Prostate gland (tissue), 2 donors: ENCODE measurements at regions of chrX and their contacts with region 1.

Region 1: DNA sequence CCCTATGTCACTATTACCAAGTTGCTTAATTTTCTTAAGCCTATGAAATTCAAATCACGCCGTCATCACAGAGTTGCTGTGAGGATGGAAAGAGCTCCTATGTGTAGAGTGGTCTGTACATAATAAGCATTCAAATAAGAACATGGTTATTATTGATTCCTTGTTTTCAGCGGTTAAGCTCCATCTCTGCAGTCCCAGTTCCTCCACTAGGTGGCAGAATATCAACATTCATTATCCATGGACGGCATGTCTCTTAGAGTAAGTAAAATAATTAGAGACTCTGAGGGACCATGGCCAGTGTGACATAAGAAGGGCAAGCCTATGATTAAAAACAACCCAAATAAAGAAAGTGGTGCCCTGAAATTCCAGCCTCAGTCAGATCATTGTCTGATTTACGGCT is 132.5 kb upstream of the NHS start:
- DNase-seq: peak; percentile 34
- H3K4me3 ChIP-seq: no peak overlapping the region
- H3K27ac ChIP-seq: no peak overlapping the region
- H3K4me1 ChIP-seq: no peaks in the 10 kb centered on the region
- H3K27me3 ChIP-seq: no peaks in the 10 kb centered on the region
- CTCF ChIP-seq: peak; percentile 42 to 69 (median 62)
- POLR2A ChIP-seq: no peak

Region 2: GRCh38 chrX:17397074-17397473 is 154.6 kb after region 1 on chrX:
- intact Hi-C with region 1: no loop called
- DNase-seq: no peak
- H3K4me3 ChIP-seq: no peak overlapping the region
- H3K27ac ChIP-seq: no peak overlapping the region
- H3K4me1 ChIP-seq: no peaks in the 10 kb centered on the region
- H3K27me3 ChIP-seq: no peaks in the 10 kb centered on the region
- CTCF ChIP-seq: no peak
- POLR2A ChIP-seq: no peak

Region 3: DNA sequence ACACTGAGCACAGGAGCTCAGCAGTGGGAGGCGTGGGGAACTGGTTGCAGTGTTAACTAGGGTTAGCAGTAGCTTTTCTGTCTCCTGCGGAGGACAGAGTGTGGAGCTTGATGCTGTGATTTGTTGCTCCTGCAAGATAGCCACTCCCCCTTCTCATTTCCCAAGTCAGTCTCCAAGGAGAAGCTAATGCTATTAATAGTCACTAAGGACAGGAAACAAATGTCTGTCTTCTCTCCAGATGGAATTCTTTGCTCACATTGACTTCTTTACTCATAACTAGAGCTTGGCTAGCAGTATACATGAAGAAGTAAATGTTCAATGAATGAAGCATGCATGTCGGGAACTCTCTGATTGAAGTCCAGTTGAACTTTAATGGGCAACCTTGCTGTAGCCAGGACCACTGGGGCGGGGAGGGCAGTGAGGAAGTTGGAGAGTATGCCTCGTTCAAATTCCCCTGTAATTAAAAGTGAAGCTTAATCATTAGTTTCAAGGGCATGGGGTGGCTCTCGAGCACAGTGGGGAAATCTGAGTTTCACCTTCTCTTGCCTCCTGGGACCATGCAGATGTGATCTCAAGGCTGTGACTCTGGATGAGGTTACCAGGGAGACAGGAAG is 338.2 kb after region 1 on chrX:
- intact Hi-C with region 1: loop called (anchors 10 kb)
- DNase-seq: no peak
- H3K4me3 ChIP-seq: no peak overlapping the region
- H3K27ac ChIP-seq: no peak overlapping the region
- H3K4me1 ChIP-seq: no peaks in the 10 kb centered on the region
- H3K27me3 ChIP-seq: no peaks in the 10 kb centered on the region
- CTCF ChIP-seq: no peak
- POLR2A ChIP-seq: no peak

Region 4: DNA sequence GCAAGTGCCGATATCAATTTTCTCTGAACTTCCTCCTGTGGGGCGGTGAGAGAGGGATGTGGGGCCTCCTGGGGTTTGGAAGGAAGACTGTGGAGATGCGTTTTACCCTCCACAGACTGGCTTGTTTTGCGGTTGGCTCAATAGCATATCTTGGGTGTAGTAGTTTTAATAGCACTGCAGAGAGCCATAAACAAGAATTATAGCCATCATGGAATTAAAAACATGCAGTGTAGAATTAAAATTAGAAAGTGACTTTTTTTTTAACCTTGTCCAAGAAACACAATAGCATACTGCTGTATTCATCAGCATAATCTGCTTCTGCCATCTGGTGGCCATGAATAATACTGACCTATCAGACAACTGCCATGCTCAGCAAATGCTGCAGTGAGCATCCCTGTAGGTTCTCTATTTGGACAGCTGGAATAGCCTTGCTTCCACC is 447.5 kb after region 1 on chrX:
- intact Hi-C with region 1: loop called (anchors 5 kb)
- DNase-seq: peak; percentile 56
- H3K4me3 ChIP-seq: no peak overlapping the region
- H3K27ac ChIP-seq: no peak overlapping the region
- H3K4me1 ChIP-seq: no peaks in the 10 kb centered on the region
- H3K27me3 ChIP-seq: no peaks in the 10 kb centered on the region
- CTCF ChIP-seq: peak in 3 of 4 experiments; percentile 48 to 78 (median 65)
- POLR2A ChIP-seq: no peak